Transverse colon (tissue), 4 donors: ENCODE measurements at regions of chrX and their contacts with region 1.

Region 1: GRCh38 chrX:46477435-46477834 is 67.8 kb downstream of the ZNF674 start:
- DNase-seq: no peak
- H3K4me3 ChIP-seq: no peak overlapping the region
- H3K27ac ChIP-seq: no peak overlapping the region
- H3K4me1 ChIP-seq: no peaks in the 10 kb centered on the region
- H3K27me3 ChIP-seq: no peaks in the 10 kb centered on the region
- CTCF ChIP-seq: no peak
- EP300 ChIP-seq: no peak
- POLR2A ChIP-seq: no peak

Region 2: GRCh38 chrX:46506076-46506475 is 28.6 kb after region 1 on chrX:
- in situ Hi-C with region 1: no loop called
- intact Hi-C with region 1: loop called (anchors 1 kb)
- DNase-seq: no peak
- H3K4me3 ChIP-seq: no peak overlapping the region
- H3K27ac ChIP-seq: no peak overlapping the region
- H3K4me1 ChIP-seq: no peaks in the 10 kb centered on the region
- H3K27me3 ChIP-seq: no peaks in the 10 kb centered on the region
- CTCF ChIP-seq: no peak
- EP300 ChIP-seq: no peak
- POLR2A ChIP-seq: no peak